MCF 10A (cell line): ENCODE measurements at regions of chr1 and their contacts with region 1.

Region 1: DNA sequence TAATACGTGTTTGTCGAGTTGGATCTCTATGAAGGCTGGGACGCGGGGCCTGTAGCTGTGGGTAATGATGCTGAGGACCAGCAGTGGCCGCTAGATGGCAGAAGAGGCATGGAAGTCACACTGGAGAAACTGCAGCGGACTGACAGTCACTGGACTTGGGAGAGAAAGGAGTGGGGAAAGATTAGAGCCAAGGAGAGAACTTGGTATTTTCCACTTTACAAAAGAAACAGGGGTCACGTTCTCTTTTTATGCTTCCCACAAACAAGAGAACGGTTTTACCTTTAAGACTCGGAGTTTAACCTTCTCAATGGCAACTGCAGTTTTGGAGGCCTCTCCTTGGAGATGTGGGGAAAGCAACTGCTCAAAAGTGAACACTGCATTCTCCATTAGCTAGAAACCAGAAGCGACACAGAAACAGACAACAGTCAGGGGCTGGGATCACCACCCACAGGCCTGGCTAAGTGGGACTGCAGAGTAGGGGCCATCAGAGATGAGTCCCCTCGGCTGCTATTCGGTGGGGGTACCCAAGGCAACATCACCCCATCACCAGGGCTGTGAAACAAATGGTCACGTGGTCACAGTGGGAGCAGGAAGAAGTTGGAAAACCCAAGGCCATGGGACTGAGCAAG is 51.1 kb upstream of the EDEM3 start:
- DNase-seq: peak; percentile 95
- H3K4me3 Mint-ChIP-seq: no peak overlapping the region
- H3K27ac Mint-ChIP-seq: no peak overlapping the region
- H3K4me1 Mint-ChIP-seq: peaks cover 6% of the 10 kb centered on the region
- H3K27me3 Mint-ChIP-seq: peaks cover 46% of the 10 kb centered on the region
- CTCF ChIP-seq: peak; percentile 99

Region 2: DNA sequence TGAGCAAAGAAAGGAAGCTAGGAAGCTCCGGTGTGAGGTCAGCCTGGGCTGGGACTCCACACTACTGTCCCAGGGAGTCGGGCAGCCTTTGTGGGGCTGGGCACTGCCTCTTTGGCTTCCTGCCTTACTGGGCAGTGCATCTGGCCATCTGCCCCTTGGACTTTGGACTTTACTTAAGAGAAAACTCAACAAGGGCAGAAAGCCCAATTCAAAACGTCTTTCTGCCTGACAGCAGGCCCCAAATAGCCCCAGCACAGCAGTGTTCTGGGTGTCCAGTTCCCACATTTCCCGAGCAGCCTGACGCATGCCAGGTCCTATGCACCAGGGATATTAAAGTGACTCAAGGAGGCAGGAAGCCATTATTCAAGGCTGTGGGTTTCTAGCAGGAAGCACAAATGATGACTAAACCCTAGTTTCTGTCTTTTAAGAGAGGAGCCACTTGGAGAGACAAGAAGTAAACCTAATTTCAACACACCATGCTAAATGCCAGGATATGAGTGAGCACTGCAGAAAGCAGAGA is 13.3 kb before region 1 on chr1:
- CTCF ChIA-PET with region 1: interaction called, 55 read pairs
- POLR2A ChIA-PET with region 1: interaction called, 6 read pairs
- intact Hi-C with region 1: no loop called
- DNase-seq: peak; percentile 99
- H3K4me3 Mint-ChIP-seq: no peak overlapping the region
- H3K27ac Mint-ChIP-seq: peak overlapping the region; percentile 73
- H3K4me1 Mint-ChIP-seq: peaks cover 17% of the 10 kb centered on the region
- H3K27me3 Mint-ChIP-seq: no peaks in the 10 kb centered on the region
- CTCF ChIP-seq: no peak

Region 3: GRCh38 chr1:184838489-184838951 is 32.7 kb after region 1 on chr1:
- CTCF ChIA-PET with region 1: interaction called, 20 read pairs
- POLR2A ChIA-PET with region 1: interaction called, 4 read pairs
- intact Hi-C with region 1: no loop called
- DNase-seq: peak; percentile 98
- H3K4me3 Mint-ChIP-seq: no peak overlapping the region
- H3K27ac Mint-ChIP-seq: no peak overlapping the region
- H3K4me1 Mint-ChIP-seq: peaks cover 16% of the 10 kb centered on the region
- H3K27me3 Mint-ChIP-seq: peaks cover 90% of the 10 kb centered on the region
- CTCF ChIP-seq: no peak

Region 4: GRCh38 chr1:184973272-184974055 is 167.7 kb after region 1 on chr1:
- CTCF ChIA-PET with region 1: interaction called, 270 read pairs
- POLR2A ChIA-PET with region 1: interaction called, 5 read pairs
- intact Hi-C with region 1: no loop called
- DNase-seq: peak; percentile 51
- H3K4me3 Mint-ChIP-seq: peak overlapping the region; percentile 70
- H3K27ac Mint-ChIP-seq: peak overlapping the region; percentile 44
- H3K4me1 Mint-ChIP-seq: peaks cover 6% of the 10 kb centered on the region
- H3K27me3 Mint-ChIP-seq: peaks cover 85% of the 10 kb centered on the region
- CTCF ChIP-seq: no peak

Region 5: GRCh38 chr1:185170291-185170848 is 364.6 kb after region 1 on chr1:
- CTCF ChIA-PET with region 1: interaction called, 34 read pairs
- POLR2A ChIA-PET with region 1: interaction called, 3 read pairs
- intact Hi-C with region 1: loop called (anchors 1 kb)
- DNase-seq: peak; percentile 84
- H3K4me3 Mint-ChIP-seq: no peak overlapping the region
- H3K27ac Mint-ChIP-seq: no peak overlapping the region
- H3K4me1 Mint-ChIP-seq: no peaks in the 10 kb centered on the region
- H3K27me3 Mint-ChIP-seq: no peaks in the 10 kb centered on the region
- CTCF ChIP-seq: peak; percentile 80

Region 6: GRCh38 chr1:186212544-186213226 is 1406.9 kb after region 1 on chr1:
- CTCF ChIA-PET with region 1: no interaction called
- POLR2A ChIA-PET with region 1: no interaction called
- intact Hi-C with region 1: loop called (anchors 5 kb)
- DNase-seq: peak; percentile 91
- H3K4me3 Mint-ChIP-seq: no peak overlapping the region
- H3K27ac Mint-ChIP-seq: peak overlapping the region; percentile 35
- H3K4me1 Mint-ChIP-seq: peaks cover 8% of the 10 kb centered on the region
- H3K27me3 Mint-ChIP-seq: no peaks in the 10 kb centered on the region
- CTCF ChIP-seq: peak; percentile 99